ENCODE measurements at regions of chr2 and their contacts with region 1.

Region 1: GRCh38 chr2:10832203-10832936 is 19.8 kb upstream of the PDIA6 start:
- DNase-seq: peak; percentile 70 to 96
- H3K4me3 ChIP-seq: peak overlapping the region in 2 of 4 experiments; percentile 36 to 52; a peak in 4 of 8 replicates
- H3K27ac ChIP-seq: no peak overlapping the region
- H3K4me1 ChIP-seq: peaks cover 0 to 7% (median 4%) of the 10 kb centered on the region in 4 experiments; a peak in 5 of 7 replicates
- H3K27me3 ChIP-seq: peaks cover 0 to 7% (median 4%) of the 10 kb centered on the region in 4 experiments; a peak in 3 of 7 replicates
- CTCF ChIP-seq: peak; percentile 95 to 98 (median 97)
- EP300 ChIP-seq: no peak
- POLR2A ChIP-seq: no peak
- RAD21 ChIP-seq: peak; percentile 95 to 97

Region 2: DNA sequence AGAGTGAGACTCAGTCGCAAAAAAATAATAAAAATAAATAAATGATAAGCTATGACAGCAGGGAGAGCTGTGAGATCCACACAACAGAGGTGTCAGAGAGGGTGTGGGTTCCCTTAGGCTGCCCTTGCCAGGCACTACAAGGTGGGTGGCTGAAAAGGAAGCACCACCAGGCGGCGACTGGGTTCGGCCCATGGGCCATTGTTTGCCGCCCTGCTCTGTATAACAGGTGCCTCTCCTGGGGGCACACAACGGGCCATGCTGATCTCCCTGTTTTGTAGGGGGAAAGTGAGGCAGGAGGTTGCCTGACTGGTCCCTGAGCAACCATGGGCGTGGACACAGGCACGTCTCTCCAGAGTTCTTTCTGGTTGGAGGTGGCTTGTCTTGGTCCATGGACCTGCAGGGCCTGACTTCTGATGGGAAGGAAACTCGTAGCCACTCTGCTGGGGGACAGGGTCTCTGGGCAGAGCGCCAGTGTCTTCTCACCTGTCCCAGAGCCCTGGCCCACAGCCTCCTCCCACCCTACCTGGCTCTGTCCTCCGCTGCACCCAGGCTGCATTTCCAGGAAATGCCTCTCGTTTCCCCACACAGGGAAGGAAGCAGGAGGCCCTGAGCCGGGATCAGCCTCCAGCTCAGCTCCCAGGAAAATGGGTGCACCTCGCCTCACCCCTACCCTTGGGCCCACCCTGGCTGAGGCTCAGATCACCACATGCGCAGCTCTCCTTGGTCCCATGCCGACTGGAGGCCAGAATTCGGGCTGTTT is 274.7 kb before region 1 on chr2:
- CTCF ChIA-PET with region 1: no interaction called
- POLR2A ChIA-PET with region 1: no interaction called
- DNase-seq: no peak
- H3K4me3 ChIP-seq: no peak overlapping the region
- H3K27ac ChIP-seq: no peak overlapping the region
- H3K4me1 ChIP-seq: no peaks in the 10 kb centered on the region
- H3K27me3 ChIP-seq: no peaks in the 10 kb centered on the region
- CTCF ChIP-seq: peak in 2 of 3 experiments; percentile 6 to 9; a peak in 2 of 4 replicates
- EP300 ChIP-seq: no peak
- POLR2A ChIP-seq: no peak
- RAD21 ChIP-seq: peak; percentile 7 to 30; a peak in 1 of 4 replicates

Region 3: GRCh38 chr2:10709290-10709939 is 123.0 kb before region 1 on chr2:
- CTCF ChIA-PET with region 1: no interaction called
- POLR2A ChIA-PET with region 1: no interaction called
- DNase-seq: peak; percentile 41 to 72
- H3K4me3 ChIP-seq: no peak overlapping the region
- H3K27ac ChIP-seq: no peak overlapping the region
- H3K4me1 ChIP-seq: peaks cover 0 to 7% (median 0%) of the 10 kb centered on the region in 4 experiments; a peak in 2 of 7 replicates
- H3K27me3 ChIP-seq: no peaks in the 10 kb centered on the region
- CTCF ChIP-seq: peak; percentile 63 to 85 (median 80)
- EP300 ChIP-seq: no peak
- POLR2A ChIP-seq: no peak
- RAD21 ChIP-seq: peak; percentile 79 to 82

Region 4: DNA sequence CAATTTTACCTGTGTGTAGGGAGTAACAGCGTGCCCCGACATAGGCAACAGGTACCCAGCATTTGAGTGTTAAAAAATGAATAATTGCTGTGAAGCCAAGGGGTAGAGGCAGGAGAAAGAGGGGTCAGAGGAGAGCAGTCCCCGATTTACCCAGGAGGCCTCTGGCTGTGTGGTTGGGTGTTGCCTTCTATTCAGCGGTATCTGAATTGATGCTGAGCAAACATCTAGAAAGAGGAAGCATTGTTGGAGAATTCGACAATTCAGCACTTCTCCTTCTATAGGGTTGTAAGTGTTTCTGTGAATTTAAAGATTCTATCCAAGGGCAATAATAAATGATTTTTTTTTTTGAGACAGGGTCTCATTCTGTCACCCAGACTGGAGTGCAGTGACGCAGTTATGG is 11.1 kb before region 1 on chr2:
- CTCF ChIA-PET with region 1: interaction called, 112 read pairs
- POLR2A ChIA-PET with region 1: no interaction called
- DNase-seq: no peak
- H3K4me3 ChIP-seq: no peak overlapping the region
- H3K27ac ChIP-seq: no peak overlapping the region
- H3K4me1 ChIP-seq: no peaks in the 10 kb centered on the region; a peak in 1 of 7 replicates
- H3K27me3 ChIP-seq: no peaks in the 10 kb centered on the region
- CTCF ChIP-seq: no peak
- EP300 ChIP-seq: no peak
- POLR2A ChIP-seq: no peak
- RAD21 ChIP-seq: no peak

Region 5: GRCh38 chr2:10877651-10878111 is 45.3 kb after region 1 on chr2:
- CTCF ChIA-PET with region 1: interaction called, 21 read pairs
- POLR2A ChIA-PET with region 1: interaction called, 3 read pairs
- DNase-seq: no peak
- H3K4me3 ChIP-seq: no peak overlapping the region
- H3K27ac ChIP-seq: no peak overlapping the region
- H3K4me1 ChIP-seq: peaks cover 0 to 7% (median 0%) of the 10 kb centered on the region in 4 experiments; a peak in 1 of 7 replicates
- H3K27me3 ChIP-seq: no peaks in the 10 kb centered on the region
- CTCF ChIP-seq: no peak
- EP300 ChIP-seq: no peak
- POLR2A ChIP-seq: no peak
- RAD21 ChIP-seq: no peak

Region 6: GRCh38 chr2:10911261-10912075 is 79.1 kb after region 1 on chr2 and contains the start of gene KCNF1:
- CTCF ChIA-PET with region 1: interaction called, 234 read pairs
- POLR2A ChIA-PET with region 1: interaction called, 3 read pairs
- DNase-seq: no peak
- H3K4me3 ChIP-seq: peak within 1 kb of the TSS; percentile 32 to 64 (median 46)
- H3K27ac ChIP-seq: no peak within 1 kb of the TSS
- H3K4me1 ChIP-seq: peaks cover 3 to 28% (median 10%) of the 10 kb centered on the region in 4 experiments
- H3K27me3 ChIP-seq: peaks cover 13 to 40% (median 29%) of the 10 kb centered on the region in 4 experiments; a peak in 6 of 7 replicates
- CTCF ChIP-seq: peak in 2 of 3 experiments; percentile 19 to 34; a peak in 2 of 4 replicates
- EP300 ChIP-seq: no peak
- POLR2A ChIP-seq: no peak
- RAD21 ChIP-seq: peak; percentile 36 to 39
- total RNA-seq, gene KCNF1: 0.48 and 0.90 TPM in 2 replicates

Region 7: GRCh38 chr2:10971881-10972260 is 139.5 kb after region 1 on chr2:
- CTCF ChIA-PET with region 1: interaction called, 10 read pairs
- POLR2A ChIA-PET with region 1: no interaction called
- DNase-seq: no peak
- H3K4me3 ChIP-seq: no peak overlapping the region
- H3K27ac ChIP-seq: no peak overlapping the region
- H3K4me1 ChIP-seq: peaks cover 0 to 9% (median 0%) of the 10 kb centered on the region in 4 experiments; a peak in 4 of 7 replicates
- H3K27me3 ChIP-seq: no peaks in the 10 kb centered on the region
- CTCF ChIP-seq: no peak
- EP300 ChIP-seq: no peak
- POLR2A ChIP-seq: no peak
- RAD21 ChIP-seq: no peak

Region 8: DNA sequence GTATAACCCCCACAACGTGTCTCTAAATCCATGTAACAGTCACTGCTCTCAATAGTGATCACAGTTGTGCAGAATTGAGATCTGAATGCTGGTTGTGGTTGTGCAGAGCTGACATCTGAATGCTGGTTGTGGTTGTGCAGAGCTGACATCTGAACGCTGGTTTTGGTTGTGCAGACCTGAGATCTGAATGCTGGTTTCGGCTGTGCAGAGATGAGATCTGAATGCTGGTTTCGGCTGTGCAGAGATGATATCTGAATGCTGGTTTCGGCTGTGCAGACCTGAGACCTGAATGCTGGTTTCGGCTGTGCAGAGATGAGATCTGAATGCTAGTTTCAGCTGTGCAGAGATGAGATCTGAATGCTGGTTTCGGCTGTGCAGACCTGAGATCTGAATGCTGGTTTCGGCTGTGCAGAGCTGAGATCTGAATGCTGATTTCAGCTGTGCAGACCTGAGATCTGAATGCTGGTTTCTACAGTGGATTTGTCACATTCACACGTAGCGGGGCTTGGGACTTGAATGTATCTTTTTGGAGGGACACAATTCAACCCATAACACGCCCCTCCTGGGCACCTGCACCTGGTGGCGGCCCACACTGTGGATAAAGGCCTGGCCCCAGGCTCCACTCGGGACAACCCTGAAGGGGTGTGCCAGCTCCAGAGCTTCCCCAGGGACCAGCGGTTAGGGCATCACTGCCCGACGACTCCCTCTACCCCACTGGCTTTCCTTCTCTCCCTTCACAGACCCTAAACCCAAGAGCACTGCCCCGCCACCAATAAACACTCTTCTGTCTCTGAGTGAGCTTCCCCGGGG is 271.8 kb after region 1 on chr2:
- CTCF ChIA-PET with region 1: interaction called, 12 read pairs
- POLR2A ChIA-PET with region 1: no interaction called
- DNase-seq: no peak
- H3K4me3 ChIP-seq: no peak overlapping the region
- H3K27ac ChIP-seq: no peak overlapping the region
- H3K4me1 ChIP-seq: no peaks in the 10 kb centered on the region
- H3K27me3 ChIP-seq: no peaks in the 10 kb centered on the region
- CTCF ChIP-seq: no peak
- EP300 ChIP-seq: no peak
- POLR2A ChIP-seq: no peak
- RAD21 ChIP-seq: no peak